T-cell (primary cell): ENCODE measurements at regions of chr10 and their contacts with region 1.

Region 1: GRCh38 chr10:66591865-66592264 is 334.0 kb upstream of the LRRTM3 start:
- DNase-seq: no peak
- ATAC-seq: no peak
- H3K4me3 ChIP-seq: no peak overlapping the region
- H3K4me3 Mint-ChIP-seq: no peak overlapping the region
- H3K27ac ChIP-seq: no peak overlapping the region
- H3K27ac Mint-ChIP-seq: no peak overlapping the region
- H3K4me1 ChIP-seq: no peaks in the 10 kb centered on the region
- H3K4me1 Mint-ChIP-seq: no peaks in the 10 kb centered on the region
- H3K27me3 ChIP-seq: no peaks in the 10 kb centered on the region
- H3K27me3 Mint-ChIP-seq: no peaks in the 10 kb centered on the region

Region 2: DNA sequence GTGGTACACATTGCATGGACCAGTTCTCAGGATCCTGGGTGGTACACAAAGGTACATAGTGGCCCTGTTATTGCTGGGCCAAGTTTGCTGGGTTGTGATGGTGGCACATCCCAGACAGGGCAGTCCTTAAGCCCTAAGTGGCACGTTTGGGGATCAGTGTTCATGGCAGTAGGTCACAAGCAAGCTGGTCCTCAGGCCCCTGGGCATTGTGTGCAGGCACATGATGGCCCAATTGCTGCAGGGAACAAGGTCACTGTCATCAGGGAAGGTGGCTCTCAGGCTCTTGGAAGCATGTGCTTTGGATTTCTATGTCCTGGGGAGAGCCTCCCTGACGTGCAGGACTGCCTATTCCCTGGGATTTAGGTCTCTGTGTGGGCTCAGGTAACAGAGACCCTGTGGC is 78.4 kb before region 1 on chr10:
- CTCF ChIA-PET with region 1: no interaction called
- POLR2A ChIA-PET with region 1: no interaction called
- DNase-seq: no peak
- ATAC-seq: no peak
- H3K4me3 ChIP-seq: no peak overlapping the region
- H3K4me3 Mint-ChIP-seq: no peak overlapping the region
- H3K27ac ChIP-seq: no peak overlapping the region
- H3K27ac Mint-ChIP-seq: no peak overlapping the region
- H3K4me1 ChIP-seq: no peaks in the 10 kb centered on the region
- H3K4me1 Mint-ChIP-seq: no peaks in the 10 kb centered on the region
- H3K27me3 ChIP-seq: no peaks in the 10 kb centered on the region
- H3K27me3 Mint-ChIP-seq: no peaks in the 10 kb centered on the region

Region 3: DNA sequence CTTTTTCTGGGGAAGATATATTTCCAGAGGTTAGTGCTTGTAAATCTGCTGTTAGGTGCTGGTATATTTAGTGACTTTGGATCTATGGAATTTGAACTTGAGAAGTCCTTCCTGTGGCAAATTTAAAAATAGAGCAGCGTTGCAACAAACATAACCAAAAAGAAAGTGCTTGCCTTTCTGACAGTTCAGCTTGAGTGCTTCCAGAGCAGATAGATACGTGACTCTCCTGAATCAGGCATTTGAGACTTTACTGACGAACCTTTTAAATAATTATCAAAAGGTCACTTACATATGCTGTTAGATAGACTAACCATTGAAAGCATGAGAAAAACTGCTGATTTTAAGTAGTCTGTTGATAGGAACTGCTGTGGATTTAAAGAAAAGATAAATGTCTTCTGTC is 53.5 kb before region 1 on chr10:
- CTCF ChIA-PET with region 1: no interaction called
- POLR2A ChIA-PET with region 1: interaction called in 1 of 2 experiments, 11 read pairs
- DNase-seq: no peak
- ATAC-seq: no peak
- H3K4me3 ChIP-seq: no peak overlapping the region
- H3K4me3 Mint-ChIP-seq: no peak overlapping the region
- H3K27ac ChIP-seq: no peak overlapping the region
- H3K27ac Mint-ChIP-seq: no peak overlapping the region
- H3K4me1 ChIP-seq: no peaks in the 10 kb centered on the region
- H3K4me1 Mint-ChIP-seq: no peaks in the 10 kb centered on the region
- H3K27me3 ChIP-seq: no peaks in the 10 kb centered on the region
- H3K27me3 Mint-ChIP-seq: no peaks in the 10 kb centered on the region

Region 4: DNA sequence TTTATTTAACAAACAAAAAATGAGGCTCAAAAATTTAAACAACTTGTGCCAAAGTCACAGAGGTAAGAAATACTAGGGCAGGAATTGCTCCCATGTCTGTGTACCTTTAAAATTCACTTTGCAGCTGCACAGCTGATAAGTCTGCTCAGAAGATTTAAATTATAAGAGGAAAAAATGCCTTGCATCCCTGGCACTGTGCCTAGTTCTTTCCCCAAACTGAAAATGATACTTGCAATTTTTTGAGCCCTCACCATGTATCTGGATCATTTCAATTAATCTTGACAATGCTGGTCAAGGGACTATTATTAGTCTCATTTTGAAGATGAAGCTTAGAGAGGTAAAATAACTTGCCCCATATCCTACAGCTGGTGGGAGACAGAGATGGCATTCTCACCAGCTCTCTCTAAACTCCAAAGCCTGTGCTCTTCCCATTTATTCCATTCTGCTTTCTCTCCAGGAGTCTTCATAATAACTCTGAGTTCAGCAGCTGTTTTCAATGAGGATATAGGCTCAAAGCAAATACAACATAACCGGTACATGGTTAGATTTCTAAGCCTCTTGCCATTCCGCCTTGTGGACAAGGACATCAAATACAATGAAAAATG is 16.5 kb before region 1 on chr10:
- CTCF ChIA-PET with region 1: no interaction called
- POLR2A ChIA-PET with region 1: interaction called in 1 of 2 experiments, 10 read pairs
- DNase-seq: no peak
- ATAC-seq: no peak
- H3K4me3 ChIP-seq: no peak overlapping the region
- H3K4me3 Mint-ChIP-seq: no peak overlapping the region
- H3K27ac ChIP-seq: no peak overlapping the region
- H3K27ac Mint-ChIP-seq: no peak overlapping the region
- H3K4me1 ChIP-seq: no peaks in the 10 kb centered on the region
- H3K4me1 Mint-ChIP-seq: no peaks in the 10 kb centered on the region
- H3K27me3 ChIP-seq: no peaks in the 10 kb centered on the region
- H3K27me3 Mint-ChIP-seq: no peaks in the 10 kb centered on the region

Region 5: DNA sequence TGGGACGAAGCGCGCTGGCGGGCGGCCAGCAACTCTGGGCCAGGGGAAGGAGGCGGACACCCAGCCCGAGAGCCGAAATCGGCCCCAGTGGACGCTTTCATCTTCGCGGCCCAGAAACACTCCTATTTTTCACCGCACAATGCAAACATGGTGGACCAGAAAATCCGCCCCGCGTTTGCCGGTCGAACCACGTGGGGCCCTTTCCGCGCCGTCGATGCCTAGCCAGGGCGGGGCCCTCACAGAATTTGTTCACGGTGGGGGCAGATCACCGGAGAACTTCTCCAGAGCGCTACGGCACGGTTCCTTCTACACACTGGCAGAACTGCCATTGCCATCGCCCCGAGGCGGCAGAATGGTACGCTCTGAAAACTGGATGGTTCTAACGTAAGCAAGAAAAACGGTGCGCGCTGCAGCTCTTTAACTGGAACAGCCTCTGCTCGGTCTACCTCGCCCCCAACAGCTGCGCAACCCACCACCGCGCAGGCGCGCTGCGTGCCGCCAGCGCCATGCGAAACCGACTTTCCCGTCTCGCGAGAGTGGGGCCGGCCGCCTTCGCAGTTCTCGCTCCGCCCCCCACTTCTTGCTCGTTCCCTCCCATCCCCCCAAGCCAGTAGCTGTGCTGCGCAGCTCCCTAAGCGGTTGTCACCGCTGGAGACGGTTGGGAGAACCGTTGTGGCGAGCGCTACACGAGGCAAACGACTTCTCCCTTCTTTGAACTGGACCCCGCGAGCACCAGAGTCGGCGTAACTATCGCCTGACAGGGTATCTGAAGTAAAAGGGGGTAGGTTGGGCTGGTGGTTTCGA is 1739.8 kb after region 1 on chr10 and contains the start of gene HNRNPH3:
- CTCF ChIA-PET with region 1: no interaction called
- POLR2A ChIA-PET with region 1: no interaction called
- DNase-seq: peak; percentile 97 to 100 (median 98)
- ATAC-seq: peak; percentile 83 to 86 (median 84)
- H3K4me3 ChIP-seq: peak within 1 kb of the TSS; percentile 77 to 88
- H3K4me3 Mint-ChIP-seq: peak within 1 kb of the TSS; percentile 98 to 100 (median 100)
- H3K27ac ChIP-seq: peak within 1 kb of the TSS; percentile 95
- H3K27ac Mint-ChIP-seq: peak within 1 kb of the TSS; percentile 100
- H3K4me1 ChIP-seq: peaks cover 16 to 34% of the 10 kb centered on the region in 2 experiments
- H3K4me1 Mint-ChIP-seq: peaks cover 44 to 61% (median 47%) of the 10 kb centered on the region in 3 donors
- H3K27me3 ChIP-seq: no peaks in the 10 kb centered on the region
- H3K27me3 Mint-ChIP-seq: no peaks in the 10 kb centered on the region
- total RNA-seq, gene HNRNPH3: 128 to 186 (median 137) TPM